T-cell (primary cell): ENCODE measurements at regions of chr1 and their contacts with region 1.

Region 1: GRCh38 chr1:34928066-34928696 is 1.3 kb downstream of the DLGAP3 start:
- DNase-seq: peak in 1 of 35 experiments; percentile 2
- ATAC-seq: no peak
- H3K4me3 ChIP-seq: no peak overlapping the region
- H3K4me3 Mint-ChIP-seq: peak overlapping the region; percentile 77 to 84 (median 77)
- H3K27ac ChIP-seq: no peak overlapping the region
- H3K27ac Mint-ChIP-seq: no peak overlapping the region
- H3K4me1 ChIP-seq: peaks cover 4 to 19% of the 10 kb centered on the region in 2 experiments
- H3K4me1 Mint-ChIP-seq: peaks cover 8 to 11% (median 9%) of the 10 kb centered on the region in 3 donors
- H3K27me3 ChIP-seq: peaks cover 13 to 76% of the 10 kb centered on the region in 2 experiments
- H3K27me3 Mint-ChIP-seq: peaks cover 67 to 69% of the 10 kb centered on the region in 2 donors

Region 2: GRCh38 chr1:34946211-34946610 is 18.0 kb after region 1 on chr1:
- CTCF ChIA-PET with region 1: no interaction called
- POLR2A ChIA-PET with region 1: no interaction called
- DNase-seq: no peak
- ATAC-seq: no peak
- H3K4me3 ChIP-seq: no peak overlapping the region
- H3K4me3 Mint-ChIP-seq: no peak overlapping the region
- H3K27ac ChIP-seq: no peak overlapping the region
- H3K27ac Mint-ChIP-seq: no peak overlapping the region
- H3K4me1 ChIP-seq: no peaks in the 10 kb centered on the region
- H3K4me1 Mint-ChIP-seq: no peaks in the 10 kb centered on the region
- H3K27me3 ChIP-seq: peaks cover 3 to 13% of the 10 kb centered on the region in 2 experiments
- H3K27me3 Mint-ChIP-seq: peaks cover 16 to 25% of the 10 kb centered on the region in 2 donors

Region 3: GRCh38 chr1:35079003-35079930 is 151.1 kb after region 1 on chr1 and contains the start of gene ZMYM1:
- CTCF ChIA-PET with region 1: no interaction called
- POLR2A ChIA-PET with region 1: no interaction called
- DNase-seq: peak; percentile 54 to 84 (median 73)
- ATAC-seq: peak; percentile 91 to 92 (median 91)
- H3K4me3 ChIP-seq: peak within 1 kb of the TSS; percentile 60 to 90
- H3K4me3 Mint-ChIP-seq: peak within 1 kb of the TSS; percentile 97 to 99 (median 98)
- H3K27ac ChIP-seq: peak within 1 kb of the TSS; percentile 85
- H3K27ac Mint-ChIP-seq: peak within 1 kb of the TSS; percentile 99
- H3K4me1 ChIP-seq: peaks cover 2 to 22% of the 10 kb centered on the region in 2 experiments
- H3K4me1 Mint-ChIP-seq: peaks cover 39 to 45% (median 42%) of the 10 kb centered on the region in 3 donors
- H3K27me3 ChIP-seq: peaks cover 0 to 7% of the 10 kb centered on the region in 2 experiments
- H3K27me3 Mint-ChIP-seq: peaks cover 8 to 13% of the 10 kb centered on the region in 2 donors
- total RNA-seq, gene ZMYM1: 13.7 to 26.5 (median 17.6) TPM

Region 4: GRCh38 chr1:35222322-35223083 is 294.3 kb after region 1 on chr1:
- CTCF ChIA-PET with region 1: interaction called in 1 of 2 experiments, 10 read pairs
- POLR2A ChIA-PET with region 1: no interaction called
- DNase-seq: no peak
- ATAC-seq: no peak
- H3K4me3 ChIP-seq: no peak overlapping the region
- H3K4me3 Mint-ChIP-seq: no peak overlapping the region
- H3K27ac ChIP-seq: no peak overlapping the region
- H3K27ac Mint-ChIP-seq: no peak overlapping the region
- H3K4me1 ChIP-seq: no peaks in the 10 kb centered on the region
- H3K4me1 Mint-ChIP-seq: no peaks in the 10 kb centered on the region
- H3K27me3 ChIP-seq: no peaks in the 10 kb centered on the region
- H3K27me3 Mint-ChIP-seq: peaks cover 0 to 4% of the 10 kb centered on the region in 2 donors